Gastrocnemius medialis (tissue), 4 donors: ENCODE measurements at regions of chr6 and their contacts with region 1.

Region 1: DNA sequence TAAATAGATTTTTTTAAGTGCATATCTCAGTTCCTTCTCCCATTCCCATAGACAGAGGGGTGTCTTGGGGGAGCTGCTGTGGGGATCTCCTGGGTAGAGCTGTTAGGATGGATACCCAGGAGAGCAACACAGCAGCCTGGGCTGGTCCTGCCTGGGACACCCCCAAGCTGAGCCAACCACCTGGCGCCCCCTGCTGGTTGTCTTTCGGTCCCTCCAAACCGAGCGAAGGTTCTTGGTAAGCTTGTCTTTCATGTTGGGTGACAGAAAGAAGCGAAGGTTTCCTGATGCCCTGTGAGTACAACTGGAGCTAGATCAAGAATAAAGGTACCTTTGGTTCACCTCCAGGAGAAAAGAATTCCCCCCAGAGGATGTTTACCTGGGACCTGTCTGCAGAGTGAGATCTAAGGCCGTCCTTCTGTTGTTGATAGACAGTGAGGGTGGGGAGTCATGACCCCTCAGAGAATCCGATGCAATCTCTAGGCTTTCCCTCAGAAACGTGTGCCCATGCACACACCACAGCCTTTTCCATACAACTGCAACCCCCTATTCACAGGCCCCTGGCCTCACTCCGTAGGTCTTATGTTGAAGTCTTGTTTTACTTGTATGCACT is 50.8 kb downstream of the SNX9 start:
- DNase-seq: peak; percentile 25 to 60
- ATAC-seq: peak in 1 of 2 donors; percentile 74
- H3K4me3 ChIP-seq: no peak overlapping the region
- H3K27ac ChIP-seq: no peak overlapping the region
- H3K4me1 ChIP-seq: no peaks in the 10 kb centered on the region
- H3K27me3 ChIP-seq: no peaks in the 10 kb centered on the region
- CTCF ChIP-seq: peak; percentile 58 to 83 (median 79)
- POLR2A ChIP-seq: no peak

Region 2: DNA sequence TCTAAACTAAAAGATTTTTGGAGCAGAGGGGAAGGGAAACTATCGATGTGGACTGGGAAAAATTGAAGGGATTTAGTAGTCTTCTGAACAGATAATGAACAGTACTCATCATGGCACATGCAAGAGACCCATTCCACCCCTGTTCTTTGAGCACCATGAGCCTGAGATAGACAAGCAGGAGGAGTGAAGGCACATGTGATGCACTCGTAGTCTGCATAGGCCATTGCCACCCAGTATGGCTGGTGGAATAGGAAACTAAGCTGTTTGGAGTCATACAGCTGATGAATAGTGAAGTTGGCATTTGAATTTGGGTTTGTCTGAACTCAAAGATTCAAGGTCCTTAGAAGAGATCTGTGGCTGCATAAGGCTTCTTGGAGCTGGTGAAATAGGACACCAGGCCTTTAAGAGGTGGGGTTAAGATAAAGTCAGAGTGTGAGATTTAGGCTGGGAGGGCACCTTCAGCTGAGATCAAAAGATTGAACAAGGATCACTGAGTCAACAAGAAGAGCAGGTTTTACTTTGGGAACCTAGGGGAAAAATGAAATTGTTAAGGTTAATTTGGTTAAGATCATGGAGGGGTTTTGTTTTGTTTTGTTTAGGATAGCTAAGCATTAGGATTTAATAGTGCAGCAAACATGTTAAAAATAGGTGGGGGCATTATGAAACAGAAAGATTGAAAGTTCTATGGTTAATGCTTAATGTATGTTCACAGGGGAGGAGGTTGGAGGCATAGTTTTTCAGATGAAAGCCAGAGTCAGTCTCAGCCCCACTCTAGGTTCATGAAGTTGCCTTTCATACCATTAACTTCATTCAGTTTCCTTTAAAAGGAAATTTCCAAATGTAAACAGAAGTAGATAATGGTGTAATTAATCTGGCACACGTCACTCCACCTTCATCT is 947.9 kb before region 1 on chr6:
- in situ Hi-C with region 1: no loop called
- intact Hi-C with region 1: no loop called
- DNase-seq: no peak
- ATAC-seq: peak in 1 of 2 donors; percentile 43
- H3K4me3 ChIP-seq: no peak overlapping the region
- H3K27ac ChIP-seq: peak overlapping the region in 3 of 4 donors; percentile 21 to 35 (median 30)
- H3K4me1 ChIP-seq: peaks cover 25 to 38% of the 10 kb centered on the region in 2 donors
- H3K27me3 ChIP-seq: no peaks in the 10 kb centered on the region
- CTCF ChIP-seq: no peak
- POLR2A ChIP-seq: no peak

Region 3: DNA sequence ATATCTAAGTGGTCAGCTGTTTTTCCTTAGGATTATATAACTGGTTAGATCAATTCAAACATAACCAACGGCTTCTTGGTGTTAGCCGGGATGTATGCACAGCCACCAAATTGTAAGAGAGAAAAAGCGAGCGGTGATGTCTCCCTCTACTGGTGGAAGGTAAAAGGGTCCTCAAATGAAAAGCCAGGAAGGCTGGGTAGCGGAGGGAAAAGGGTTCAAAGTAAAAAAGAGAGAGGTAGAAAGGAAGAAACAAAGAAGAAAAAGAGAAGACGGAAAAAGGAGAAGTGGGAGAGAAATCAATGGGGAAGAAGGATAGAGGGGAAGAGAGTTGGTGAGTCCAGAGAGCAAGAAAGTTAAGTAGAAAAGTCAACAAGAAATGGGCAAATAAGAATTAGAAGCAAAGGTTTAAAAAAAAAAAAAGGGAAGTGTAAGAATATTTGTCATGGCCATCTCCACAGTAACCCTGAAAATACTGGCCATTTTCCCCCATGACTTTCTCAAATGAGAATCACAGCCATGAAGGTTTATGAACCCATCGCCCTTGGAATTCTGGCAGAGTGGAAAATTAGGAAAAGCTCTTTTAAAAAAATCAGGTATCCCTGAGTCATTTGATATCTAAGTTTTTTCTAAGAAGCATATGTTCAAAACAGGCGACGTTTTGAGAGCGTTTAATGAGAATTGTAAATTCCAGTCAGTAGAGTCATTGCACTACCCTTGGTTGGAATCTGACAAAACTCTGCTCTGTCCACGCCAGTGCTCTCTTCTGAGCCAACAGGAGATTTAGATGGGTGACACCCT is 206.4 kb before region 1 on chr6:
- in situ Hi-C with region 1: no loop called
- intact Hi-C with region 1: loop called (anchors 10 kb)
- DNase-seq: no peak
- ATAC-seq: peak; percentile 61 to 77
- H3K4me3 ChIP-seq: no peak overlapping the region
- H3K27ac ChIP-seq: no peak overlapping the region
- H3K4me1 ChIP-seq: peaks cover 28 to 31% of the 10 kb centered on the region in 2 donors
- H3K27me3 ChIP-seq: no peaks in the 10 kb centered on the region
- CTCF ChIP-seq: peak; percentile 64 to 89 (median 69)
- POLR2A ChIP-seq: no peak